Common myeloid progenitor, CD34-positive (primary cell): ENCODE measurements at regions of chr19 and their contacts with region 1.

Region 1: DNA sequence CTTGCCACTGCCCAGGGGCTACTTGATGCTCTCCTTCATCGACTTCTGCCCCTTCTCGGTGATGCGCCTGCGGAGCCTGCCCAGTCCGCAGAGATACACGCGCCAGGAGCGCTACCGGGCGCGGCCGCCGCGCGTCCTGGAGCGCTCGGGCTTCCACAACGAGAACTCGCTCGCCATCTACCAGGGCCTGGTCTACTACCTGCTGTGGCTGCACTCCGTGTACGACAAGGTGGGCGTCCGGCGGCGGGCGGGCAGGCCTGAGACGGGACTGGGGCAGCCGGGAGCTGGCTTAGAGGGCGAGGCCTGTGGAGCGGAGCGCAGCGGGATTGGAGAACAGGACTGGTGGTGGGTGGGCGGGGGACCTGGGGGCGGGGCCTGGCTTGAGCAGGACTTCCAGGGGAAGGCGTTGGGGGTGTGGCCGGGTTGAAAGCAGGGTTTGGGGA is 12.7 kb upstream of the PSMD8 start:
- DNase-seq: peak; percentile 88 to 95 (median 94)
- H3K4me3 ChIP-seq: peak overlapping the region; percentile 46 to 88 (median 74)
- H3K27ac ChIP-seq: no peak overlapping the region
- H3K4me1 ChIP-seq: peaks cover 0 to 20% (median 14%) of the 10 kb centered on the region in 4 experiments
- H3K27me3 ChIP-seq: peaks cover 0 to 37% (median 24%) of the 10 kb centered on the region in 5 experiments

Region 2: GRCh38 chr19:38374429-38375176 is 12.9 kb after region 1 on chr19 and contains the start of gene PSMD8:
- CTCF ChIA-PET with region 1: interaction called, 3 read pairs
- POLR2A ChIA-PET with region 1: interaction called, 11 read pairs
- DNase-seq: peak; percentile 99 to 100 (median 100)
- H3K4me3 ChIP-seq: peak within 1 kb of the TSS; percentile 63 to 97 (median 92)
- H3K27ac ChIP-seq: peak within 1 kb of the TSS; percentile 75 to 95
- H3K4me1 ChIP-seq: peaks cover 15 to 23% (median 20%) of the 10 kb centered on the region in 4 experiments
- H3K27me3 ChIP-seq: peaks cover 0 to 3% (median 0%) of the 10 kb centered on the region in 5 experiments

Region 3: DNA sequence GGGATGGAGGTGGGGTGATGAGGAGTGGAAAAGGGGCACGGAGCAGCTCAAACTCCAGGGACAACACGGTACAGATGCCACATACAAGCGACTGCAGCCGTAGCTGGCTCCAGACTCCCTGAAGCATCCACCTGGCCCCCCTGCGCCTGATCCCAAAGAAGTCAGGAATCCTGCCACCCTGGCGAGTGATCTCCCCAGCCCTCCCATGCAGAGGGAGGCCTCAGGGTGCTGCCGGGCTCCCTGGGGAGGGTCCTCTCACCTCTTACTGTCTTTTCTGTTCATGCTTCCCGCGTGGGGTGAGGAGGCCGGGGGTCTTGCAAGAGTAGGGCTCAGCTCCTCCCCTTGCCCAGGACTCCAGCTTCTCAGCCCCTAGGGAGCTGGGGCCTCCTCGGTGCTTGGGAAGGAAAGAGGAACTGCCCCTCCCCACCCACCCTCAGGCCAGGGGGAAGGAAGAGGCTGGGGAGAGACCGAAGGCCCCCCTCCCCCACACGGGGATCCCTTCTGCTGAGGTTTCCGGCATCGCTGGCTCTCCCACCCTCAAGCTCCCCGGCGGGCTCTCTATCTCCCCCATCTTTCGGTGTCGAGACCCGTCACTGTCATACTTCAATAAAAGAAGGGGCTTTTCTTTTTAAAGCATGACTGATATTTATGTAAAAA is 64.3 kb after region 1 on chr19 and contains the start of gene RASGRP4:
- CTCF ChIA-PET with region 1: no interaction called
- POLR2A ChIA-PET with region 1: no interaction called
- DNase-seq: peak; percentile 82 to 93 (median 92)
- H3K4me3 ChIP-seq: peak within 1 kb of the TSS; percentile 31 to 81 (median 66)
- H3K27ac ChIP-seq: peak within 1 kb of the TSS in 1 of 2 experiments; percentile 69
- H3K4me1 ChIP-seq: peaks cover 3 to 44% (median 18%) of the 10 kb centered on the region in 4 experiments
- H3K27me3 ChIP-seq: no peaks in the 10 kb centered on the region